HepG2 (cell line): ENCODE measurements at regions of chr9 and their contacts with region 1.

Region 1: DNA sequence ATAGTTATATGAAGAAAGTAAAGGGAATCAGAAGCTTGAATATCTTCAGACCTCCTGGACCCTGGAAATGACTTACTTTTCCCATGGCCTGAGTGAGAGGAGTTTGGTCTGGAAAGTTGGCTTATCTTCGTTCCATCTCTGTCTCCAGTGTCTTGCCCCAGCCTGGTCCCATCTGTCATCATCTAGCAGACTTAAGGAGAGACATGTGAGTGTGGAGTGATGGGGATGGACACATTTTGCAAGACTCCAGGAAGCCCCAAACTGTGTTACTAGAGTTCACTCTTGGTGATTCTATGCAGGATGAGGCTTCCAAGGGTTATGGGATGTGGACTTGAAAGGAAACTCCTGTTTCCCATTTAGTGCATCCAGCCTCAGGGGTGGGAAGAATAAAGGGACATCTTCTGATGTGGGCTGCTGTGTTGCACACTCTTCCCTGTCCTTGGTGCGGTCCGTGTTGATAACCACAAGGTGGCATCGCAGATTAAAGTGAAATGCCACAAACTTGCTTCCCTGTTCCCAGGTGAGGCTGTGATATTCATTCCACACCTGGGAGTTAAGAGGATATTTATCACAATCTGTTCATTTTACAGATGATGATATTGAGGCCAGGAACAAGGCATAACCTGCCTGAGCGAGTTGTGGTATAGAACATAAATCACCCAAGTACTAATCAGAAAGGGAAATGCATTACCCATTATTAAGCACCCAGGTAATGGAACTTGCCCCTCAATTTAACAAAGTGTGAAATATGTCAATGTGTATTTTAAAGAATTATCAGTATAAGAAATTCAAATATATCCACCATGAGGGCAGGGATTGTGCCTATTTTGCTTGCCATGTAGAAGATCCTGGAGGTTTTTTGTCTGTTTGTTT is 269.9 kb upstream of the PAPPA start:
- DNase-seq: peak; percentile 55
- ATAC-seq: peak; percentile 91
- H3K4me3 ChIP-seq: no peak overlapping the region
- H3K27ac ChIP-seq: no peak overlapping the region
- H3K4me1 ChIP-seq: peaks cover 9% of the 10 kb centered on the region; the same call in 1 of the 2 replicates
- H3K27me3 ChIP-seq: no peaks in the 10 kb centered on the region; a peak in 1 of 5 replicates
- CTCF ChIP-seq: peak; percentile 85
- EP300 ChIP-seq: no peak
- POLR2A ChIP-seq: no peak
- RAD21 ChIP-seq: peak; percentile 68; the same call in 1 of the 2 replicates

Region 2: DNA sequence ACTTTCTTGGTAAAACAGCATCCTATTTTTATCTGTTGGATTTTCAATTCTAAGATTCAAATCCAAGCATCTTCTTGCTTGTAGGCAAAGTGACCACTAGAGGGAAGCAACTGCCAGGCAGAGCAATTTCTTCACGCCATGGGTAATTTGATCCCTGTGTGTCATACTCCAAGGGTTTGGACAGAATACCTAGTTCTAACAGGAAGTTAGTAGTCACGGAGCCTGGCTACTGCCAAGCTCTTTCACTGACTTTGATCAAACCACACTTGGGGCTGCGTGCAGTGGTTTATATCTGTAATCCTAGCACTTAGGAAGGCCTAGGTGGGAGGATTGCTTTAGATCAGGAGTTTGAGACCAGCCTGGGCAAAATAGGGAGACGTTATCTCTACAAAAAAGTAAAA is 292.1 kb before region 1 on chr9:
- CTCF ChIA-PET with region 1: no interaction called
- POLR2A ChIA-PET with region 1: no interaction called
- in situ Hi-C with region 1: loop called (anchors 25 kb)
- intact Hi-C with region 1: loop called (anchors 5 kb)
- DNase-seq: peak; percentile 74
- ATAC-seq: peak; percentile 98
- H3K4me3 ChIP-seq: no peak overlapping the region
- H3K27ac ChIP-seq: no peak overlapping the region
- H3K4me1 ChIP-seq: no peaks in the 10 kb centered on the region
- H3K27me3 ChIP-seq: no peaks in the 10 kb centered on the region
- CTCF ChIP-seq: peak; percentile 70
- EP300 ChIP-seq: no peak
- POLR2A ChIP-seq: no peak
- RAD21 ChIP-seq: 0 out of 2 replicates have a peak, but pooled peaks have one; percentile 28

Region 3: GRCh38 chr9:115845653-115846312 is 37.9 kb before region 1 on chr9:
- CTCF ChIA-PET with region 1: no interaction called
- POLR2A ChIA-PET with region 1: no interaction called
- in situ Hi-C with region 1: no loop called
- intact Hi-C with region 1: no loop called
- DNase-seq: no peak
- ATAC-seq: no peak
- H3K4me3 ChIP-seq: no peak overlapping the region
- H3K27ac ChIP-seq: no peak overlapping the region
- H3K4me1 ChIP-seq: no peaks in the 10 kb centered on the region
- H3K27me3 ChIP-seq: no peaks in the 10 kb centered on the region
- CTCF ChIP-seq: no peak
- EP300 ChIP-seq: no peak
- POLR2A ChIP-seq: no peak
- RAD21 ChIP-seq: no peak

Region 4: DNA sequence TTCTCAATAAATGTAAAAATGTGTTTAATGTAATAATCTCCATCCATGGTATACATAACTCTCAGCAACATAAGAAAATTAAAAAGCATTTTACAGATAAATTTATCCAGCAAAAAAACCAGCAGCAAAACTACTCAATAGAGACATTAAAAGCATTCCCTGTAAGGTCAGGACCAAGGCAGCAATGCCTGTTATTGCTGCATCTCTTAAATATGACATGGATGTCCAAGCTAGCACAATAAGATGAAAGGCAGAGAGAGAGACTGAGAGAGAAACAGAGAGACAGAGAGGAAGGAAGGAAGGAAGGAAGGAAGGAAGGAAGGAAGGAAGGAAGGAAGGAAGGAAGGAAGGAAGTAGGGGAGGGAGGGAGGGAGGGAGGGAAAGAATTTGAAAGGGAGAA is 19.1 kb before region 1 on chr9:
- CTCF ChIA-PET with region 1: no interaction called
- POLR2A ChIA-PET with region 1: no interaction called
- in situ Hi-C with region 1: no loop called
- intact Hi-C with region 1: no loop called
- DNase-seq: no peak
- ATAC-seq: no peak
- H3K4me3 ChIP-seq: no peak overlapping the region
- H3K27ac ChIP-seq: no peak overlapping the region
- H3K4me1 ChIP-seq: no peaks in the 10 kb centered on the region
- H3K27me3 ChIP-seq: no peaks in the 10 kb centered on the region
- CTCF ChIP-seq: no peak
- EP300 ChIP-seq: no peak
- POLR2A ChIP-seq: no peak
- RAD21 ChIP-seq: no peak

Region 5: DNA sequence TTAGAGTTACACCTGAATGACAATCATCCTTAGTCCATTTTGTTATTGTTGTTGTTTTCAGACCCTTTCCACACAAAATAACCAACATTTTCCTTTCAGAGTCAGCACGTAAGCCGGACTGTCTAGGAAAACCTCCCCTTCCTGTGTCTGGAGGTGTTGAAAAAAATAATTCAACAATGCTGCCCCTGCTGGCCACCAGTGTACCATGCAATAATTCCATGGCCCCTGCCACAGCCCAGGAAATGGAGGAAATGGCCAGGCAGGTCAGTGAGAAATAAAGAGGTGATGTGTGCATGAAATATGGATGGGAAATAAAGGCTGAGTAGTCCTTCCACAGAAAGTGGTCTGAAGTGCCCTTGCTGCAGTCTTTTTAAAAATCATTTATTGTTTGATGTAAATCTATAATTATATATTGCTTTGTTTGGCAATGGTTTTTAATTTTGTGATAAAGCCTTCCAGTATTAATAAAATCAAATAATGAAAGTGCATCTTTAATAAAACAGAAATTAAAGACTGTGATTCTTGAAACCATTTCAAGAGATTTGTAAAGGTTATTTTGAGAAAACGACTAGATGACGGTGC is 117.1 kb after region 1 on chr9:
- CTCF ChIA-PET with region 1: interaction called, 19 read pairs
- POLR2A ChIA-PET with region 1: no interaction called
- in situ Hi-C with region 1: loop called (anchors 5 kb)
- intact Hi-C with region 1: loop called (anchors 1 kb)
- DNase-seq: peak; percentile 32
- ATAC-seq: peak; percentile 93
- H3K4me3 ChIP-seq: no peak overlapping the region
- H3K27ac ChIP-seq: no peak overlapping the region
- H3K4me1 ChIP-seq: peaks cover 9% of the 10 kb centered on the region
- H3K27me3 ChIP-seq: no peaks in the 10 kb centered on the region
- CTCF ChIP-seq: peak; percentile 68
- EP300 ChIP-seq: no peak
- POLR2A ChIP-seq: no peak
- RAD21 ChIP-seq: no peak

Region 6: DNA sequence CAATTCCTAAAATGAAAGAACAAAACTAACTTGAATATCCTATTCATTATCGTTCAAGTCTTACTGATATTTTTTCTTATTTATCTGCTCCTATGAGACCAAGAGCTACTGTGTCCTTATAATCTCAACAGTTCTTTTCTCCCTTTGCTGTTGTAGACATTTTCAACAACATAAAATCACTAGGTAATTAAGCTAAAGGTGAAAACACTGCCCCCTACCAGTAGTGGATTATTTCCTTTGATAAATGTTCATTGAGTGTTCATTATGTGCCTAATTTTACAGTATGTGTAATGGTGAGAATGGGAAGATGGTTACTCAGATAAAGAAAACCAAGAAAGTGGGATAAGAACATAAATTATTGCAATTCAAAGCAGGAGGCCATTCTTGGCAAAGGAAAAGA is 228.5 kb after region 1 on chr9:
- CTCF ChIA-PET with region 1: interaction called, 6 read pairs
- POLR2A ChIA-PET with region 1: no interaction called
- in situ Hi-C with region 1: loop called (anchors 10 kb)
- intact Hi-C with region 1: loop called (anchors 1 kb)
- DNase-seq: no peak
- ATAC-seq: no peak
- H3K4me3 ChIP-seq: no peak overlapping the region
- H3K27ac ChIP-seq: no peak overlapping the region
- H3K4me1 ChIP-seq: no peaks in the 10 kb centered on the region
- H3K27me3 ChIP-seq: no peaks in the 10 kb centered on the region
- CTCF ChIP-seq: 0 out of 2 replicates have a peak, but pooled peaks have one; percentile 6
- EP300 ChIP-seq: no peak
- POLR2A ChIP-seq: no peak
- RAD21 ChIP-seq: no peak

Region 7: GRCh38 chr9:116149844-116150243 is 266.2 kb after region 1 on chr9:
- CTCF ChIA-PET with region 1: no interaction called
- POLR2A ChIA-PET with region 1: no interaction called
- in situ Hi-C with region 1: loop called (anchors 10 kb)
- intact Hi-C with region 1: loop called (anchors 2 kb)
- DNase-seq: no peak
- ATAC-seq: peak; percentile 77
- H3K4me3 ChIP-seq: no peak overlapping the region
- H3K27ac ChIP-seq: no peak overlapping the region
- H3K4me1 ChIP-seq: no peaks in the 10 kb centered on the region
- H3K27me3 ChIP-seq: peaks cover 3 to 15% of the 10 kb centered on the region in 2 experiments; a peak in 3 of 5 replicates
- CTCF ChIP-seq: peak; percentile 69
- EP300 ChIP-seq: no peak
- POLR2A ChIP-seq: no peak
- RAD21 ChIP-seq: no peak

Region 8: GRCh38 chr9:116661037-116661954 is 777.6 kb after region 1 on chr9:
- CTCF ChIA-PET with region 1: no interaction called
- POLR2A ChIA-PET with region 1: no interaction called
- in situ Hi-C with region 1: loop called (anchors 5 kb)
- intact Hi-C with region 1: loop called (anchors 5 kb)
- DNase-seq: peak; percentile 57
- ATAC-seq: peak; percentile 89
- H3K4me3 ChIP-seq: no peak overlapping the region
- H3K27ac ChIP-seq: no peak overlapping the region
- H3K4me1 ChIP-seq: peaks cover 8% of the 10 kb centered on the region; the same call in 1 of the 2 replicates
- H3K27me3 ChIP-seq: no peaks in the 10 kb centered on the region
- CTCF ChIP-seq: peak; percentile 84
- EP300 ChIP-seq: no peak
- POLR2A ChIP-seq: no peak
- RAD21 ChIP-seq: peak; percentile 71